ENCODE measurements at regions of chr6 and their contacts with region 1.

Region 1: GRCh38 chr6:30600451-30600961 is 16.5 kb downstream of the PPP1R10 start:
- DNase-seq: no peak
- ATAC-seq: no peak
- H3K4me3 ChIP-seq: no peak overlapping the region
- H3K4me3 Mint-ChIP-seq: no peak overlapping the region
- H3K27ac ChIP-seq: no peak overlapping the region
- H3K27ac Mint-ChIP-seq: no peak overlapping the region
- H3K4me1 ChIP-seq: peaks cover 0 to 6% of the 10 kb centered on the region in 2 donors
- H3K4me1 Mint-ChIP-seq: peaks cover 6% of the 10 kb centered on the region
- H3K27me3 ChIP-seq: no peaks in the 10 kb centered on the region
- H3K27me3 Mint-ChIP-seq: no peaks in the 10 kb centered on the region
- CTCF ChIP-seq: no peak

Region 2: GRCh38 chr6:30515932-30516753 is 84.4 kb before region 1 on chr6:
- CTCF ChIA-PET with region 1: interaction called, 11 read pairs
- POLR2A ChIA-PET with region 1: no interaction called
- intact Hi-C with region 1: no loop called
- DNase-seq: peak; percentile 95
- ATAC-seq: peak; percentile 85
- H3K4me3 ChIP-seq: peak overlapping the region; percentile 31 to 73 (median 58)
- H3K4me3 Mint-ChIP-seq: peak overlapping the region; percentile 90
- H3K27ac ChIP-seq: peak overlapping the region; percentile 88 to 99
- H3K27ac Mint-ChIP-seq: peak overlapping the region; percentile 99
- H3K4me1 ChIP-seq: peaks cover 34 to 66% of the 10 kb centered on the region in 2 donors
- H3K4me1 Mint-ChIP-seq: peaks cover 60% of the 10 kb centered on the region
- H3K27me3 ChIP-seq: no peaks in the 10 kb centered on the region
- H3K27me3 Mint-ChIP-seq: no peaks in the 10 kb centered on the region
- CTCF ChIP-seq: no peak

Region 3: GRCh38 chr6:30571075-30571768 is 29.3 kb before region 1 on chr6 and contains the start of gene ABCF1:
- CTCF ChIA-PET with region 1: interaction called, 22 read pairs
- POLR2A ChIA-PET with region 1: interaction called, 9 read pairs
- intact Hi-C with region 1: loop called (anchors 1 kb)
- DNase-seq: peak; percentile 99
- ATAC-seq: peak; percentile 98
- H3K4me3 ChIP-seq: peak within 1 kb of the TSS; percentile 69 to 93 (median 87)
- H3K4me3 Mint-ChIP-seq: peak within 1 kb of the TSS; percentile 96
- H3K27ac ChIP-seq: peak within 1 kb of the TSS; percentile 82 to 92
- H3K27ac Mint-ChIP-seq: peak within 1 kb of the TSS; percentile 93
- H3K4me1 ChIP-seq: peaks cover 25 to 32% of the 10 kb centered on the region in 2 donors
- H3K4me1 Mint-ChIP-seq: peaks cover 54% of the 10 kb centered on the region
- H3K27me3 ChIP-seq: no peaks in the 10 kb centered on the region
- H3K27me3 Mint-ChIP-seq: no peaks in the 10 kb centered on the region
- CTCF ChIP-seq: no peak
- total RNA-seq, gene ABCF1: 60.9 and 63.7 TPM in 2 replicates

Region 4: GRCh38 chr6:30583921-30584320 is 16.6 kb before region 1 on chr6:
- CTCF ChIA-PET with region 1: interaction called, 24 read pairs
- POLR2A ChIA-PET with region 1: no interaction called
- intact Hi-C with region 1: no loop called
- DNase-seq: no peak
- ATAC-seq: no peak
- H3K4me3 ChIP-seq: no peak overlapping the region
- H3K4me3 Mint-ChIP-seq: no peak overlapping the region
- H3K27ac ChIP-seq: no peak overlapping the region
- H3K27ac Mint-ChIP-seq: no peak overlapping the region
- H3K4me1 ChIP-seq: no peaks in the 10 kb centered on the region
- H3K4me1 Mint-ChIP-seq: no peaks in the 10 kb centered on the region
- H3K27me3 ChIP-seq: no peaks in the 10 kb centered on the region
- H3K27me3 Mint-ChIP-seq: no peaks in the 10 kb centered on the region
- CTCF ChIP-seq: no peak

Region 5: DNA sequence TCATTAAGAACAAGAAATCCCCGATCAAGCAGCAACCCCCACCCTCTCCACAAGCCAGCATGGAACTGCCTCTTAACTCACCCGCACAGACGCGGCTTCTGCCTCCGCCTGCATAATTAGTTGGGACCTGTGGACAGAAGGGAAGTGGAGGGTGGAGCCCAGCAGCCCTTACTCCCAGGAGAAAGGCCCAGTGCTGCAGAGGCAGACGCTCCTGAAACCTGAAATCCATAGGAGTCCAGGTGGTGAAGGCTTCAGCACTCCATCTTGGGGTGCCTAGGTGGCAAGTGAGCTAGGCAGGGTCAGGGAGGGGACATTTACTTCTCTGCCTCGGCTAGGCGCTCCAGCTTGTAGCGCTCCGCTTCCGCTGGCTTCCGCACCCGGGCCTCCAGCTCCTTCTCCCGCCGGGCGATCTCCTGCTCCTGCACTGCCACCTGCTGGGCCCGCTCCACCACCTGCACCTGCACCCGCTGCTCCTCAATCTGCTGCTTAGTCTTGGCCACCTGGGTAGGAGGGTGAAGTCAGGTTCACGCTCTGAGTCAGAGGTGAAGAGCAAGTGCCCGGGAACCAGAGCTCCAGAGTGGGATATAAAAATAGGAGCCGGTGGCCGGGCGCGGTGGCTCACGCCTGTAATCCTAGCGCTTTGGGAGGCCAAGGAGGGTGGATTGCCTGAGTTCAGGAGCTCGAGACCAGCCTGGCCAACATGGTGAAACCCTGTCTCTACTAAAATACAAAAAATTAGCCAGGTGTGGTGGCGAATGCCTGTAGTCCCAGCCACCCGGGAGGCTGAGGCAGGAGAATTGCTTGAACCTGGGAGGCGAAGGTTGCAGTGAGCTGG is 130.3 kb after region 1 on chr6:
- CTCF ChIA-PET with region 1: interaction called, 20 read pairs
- POLR2A ChIA-PET with region 1: interaction called, 3 read pairs
- intact Hi-C with region 1: no loop called
- DNase-seq: peak; percentile 86
- ATAC-seq: peak; percentile 89
- H3K4me3 ChIP-seq: peak overlapping the region in 3 of 5 experiments; percentile 5 to 29 (median 25)
- H3K4me3 Mint-ChIP-seq: peak overlapping the region; percentile 40
- H3K27ac ChIP-seq: no peak overlapping the region
- H3K27ac Mint-ChIP-seq: peak overlapping the region; percentile 42
- H3K4me1 ChIP-seq: peaks cover 22 to 23% of the 10 kb centered on the region in 2 donors
- H3K4me1 Mint-ChIP-seq: peaks cover 25% of the 10 kb centered on the region
- H3K27me3 ChIP-seq: no peaks in the 10 kb centered on the region
- H3K27me3 Mint-ChIP-seq: no peaks in the 10 kb centered on the region
- CTCF ChIP-seq: peak; percentile 77